Activated CD4-positive, alpha-beta T cell treated with anti-CD3 and anti-CD28 coated beads for 36 hours (primary cell): ENCODE measurements at regions of chr17 and their contacts with region 1.

Region 1: GRCh38 chr17:18855831-18856569 is 1.9 kb upstream of the PRPSAP2 start:
- DNase-seq: peak; percentile 94
- ATAC-seq: peak; percentile 85
- H3K4me3 Mint-ChIP-seq: peak overlapping the region; percentile 92
- H3K27ac Mint-ChIP-seq: peak overlapping the region; percentile 90
- H3K4me1 Mint-ChIP-seq: peaks cover 45% of the 10 kb centered on the region
- H3K27me3 Mint-ChIP-seq: no peaks in the 10 kb centered on the region

Region 2: DNA sequence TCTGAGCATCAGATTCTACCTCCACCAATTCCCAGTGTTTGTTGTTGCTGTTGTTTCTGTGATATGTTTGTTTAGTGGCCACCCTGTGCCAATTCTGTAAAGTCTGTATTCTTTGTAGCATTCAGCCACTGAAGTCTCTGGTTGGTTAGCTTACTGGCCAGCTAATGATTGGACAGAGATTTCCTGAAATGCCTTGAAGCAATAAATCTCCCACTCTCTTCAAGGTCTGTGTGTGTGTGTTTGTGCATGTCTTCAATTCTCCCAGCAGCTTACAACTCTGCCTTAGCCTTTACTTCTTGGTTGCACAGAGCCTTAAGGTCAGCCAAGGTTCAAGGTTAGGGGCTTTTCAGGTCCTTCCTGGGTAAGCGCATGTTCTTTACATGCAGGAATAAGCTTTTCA is 40.1 kb after region 1 on chr17:
- CTCF ChIA-PET with region 1: interaction called, 5 read pairs
- POLR2A ChIA-PET with region 1: no interaction called
- intact Hi-C with region 1: loop called (anchors 1 kb)
- DNase-seq: no peak
- ATAC-seq: no peak
- H3K4me3 Mint-ChIP-seq: no peak overlapping the region
- H3K27ac Mint-ChIP-seq: peak overlapping the region; percentile 48
- H3K4me1 Mint-ChIP-seq: peaks cover 21% of the 10 kb centered on the region
- H3K27me3 Mint-ChIP-seq: no peaks in the 10 kb centered on the region

Region 3: GRCh38 chr17:18921912-18922451 is 66.0 kb after region 1 on chr17:
- CTCF ChIA-PET with region 1: interaction called, 6 read pairs
- POLR2A ChIA-PET with region 1: no interaction called
- intact Hi-C with region 1: loop called (anchors 1 kb)
- DNase-seq: peak; percentile 59
- ATAC-seq: peak; percentile 73
- H3K4me3 Mint-ChIP-seq: peak overlapping the region; percentile 22
- H3K27ac Mint-ChIP-seq: peak overlapping the region; percentile 57
- H3K4me1 Mint-ChIP-seq: peaks cover 64% of the 10 kb centered on the region
- H3K27me3 Mint-ChIP-seq: no peaks in the 10 kb centered on the region

Region 4: GRCh38 chr17:19011111-19011505 is 155.1 kb after region 1 on chr17:
- CTCF ChIA-PET with region 1: no interaction called
- POLR2A ChIA-PET with region 1: no interaction called
- intact Hi-C with region 1: no loop called
- DNase-seq: no peak
- ATAC-seq: no peak
- H3K4me3 Mint-ChIP-seq: no peak overlapping the region
- H3K27ac Mint-ChIP-seq: no peak overlapping the region
- H3K4me1 Mint-ChIP-seq: no peaks in the 10 kb centered on the region
- H3K27me3 Mint-ChIP-seq: no peaks in the 10 kb centered on the region